ACHN (cell line): ENCODE measurements at regions of chr12 and their contacts with region 1.

Region 1: GRCh38 chr12:123043536-123044001 is 63.1 kb downstream of the ARL6IP4 start:
- DNase-seq: peak; percentile 95

Region 2: GRCh38 chr12:122974274-122974891 is 69.2 kb before region 1 on chr12:
- in situ Hi-C with region 1: no loop called
- DNase-seq: peak; percentile 100

Region 3: GRCh38 chr12:123232807-123233543 is 189.4 kb after region 1 on chr12 and contains the starts of genes MPHOSPH9 and MTRFR:
- in situ Hi-C with region 1: loop called (anchors 25 kb)
- DNase-seq: peak; percentile 100